PC-3 (cell line): ENCODE measurements at regions of chr7 and their contacts with region 1.

Region 1: DNA sequence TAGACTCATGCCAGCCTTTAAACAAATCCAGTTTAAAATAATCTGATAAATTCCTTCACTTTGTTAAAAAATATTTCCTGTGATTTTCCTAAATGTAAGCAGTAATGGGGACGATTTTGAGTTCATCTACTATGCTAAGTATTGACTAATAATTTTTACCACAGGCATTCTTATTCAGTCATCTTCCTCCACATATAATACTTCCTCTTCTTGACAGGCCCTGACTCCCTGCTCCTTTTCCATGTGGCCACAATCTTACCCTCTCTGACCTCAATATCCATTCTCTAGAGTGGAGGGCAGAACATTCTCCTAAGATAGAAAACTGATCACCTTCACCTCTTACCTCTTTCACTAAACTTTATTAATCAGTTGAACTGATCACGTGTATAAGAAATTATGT is 7.8 kb downstream of the DNAJC2 start:
- DNase-seq: no peak
- ATAC-seq: no peak
- H3K4me3 ChIP-seq: no peak overlapping the region
- H3K27ac ChIP-seq: no peak overlapping the region
- H3K4me1 ChIP-seq: no peaks in the 10 kb centered on the region
- H3K27me3 ChIP-seq: no peaks in the 10 kb centered on the region
- CTCF ChIP-seq: no peak

Region 2: DNA sequence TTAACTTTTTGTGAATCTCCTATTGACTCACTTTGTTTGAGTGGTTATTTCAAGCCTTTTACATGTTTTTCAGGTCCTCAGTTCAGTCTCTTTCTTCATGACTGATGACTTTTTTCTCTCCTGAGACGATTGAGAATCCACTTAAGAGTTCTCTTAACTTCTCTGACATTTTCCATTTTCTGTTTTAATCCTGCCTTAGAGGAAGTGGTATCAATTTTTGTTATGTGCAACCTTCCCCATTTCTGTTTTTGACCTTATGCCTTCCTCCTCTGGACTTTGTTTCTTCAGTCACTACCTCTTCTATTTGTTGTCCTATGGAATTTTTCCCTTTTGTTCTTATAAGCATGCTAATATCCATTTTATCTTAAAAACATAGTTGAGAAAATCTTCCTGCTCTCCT is 13.0 kb after region 1 on chr7:
- CTCF ChIA-PET with region 1: no interaction called
- POLR2A ChIA-PET with region 1: interaction called, 13 read pairs
- intact Hi-C with region 1: no loop called
- DNase-seq: no peak
- ATAC-seq: no peak
- H3K4me3 ChIP-seq: peak overlapping the region; percentile 83
- H3K27ac ChIP-seq: no peak overlapping the region
- H3K4me1 ChIP-seq: peaks cover 33% of the 10 kb centered on the region
- H3K27me3 ChIP-seq: no peaks in the 10 kb centered on the region
- CTCF ChIP-seq: no peak